ENCODE measurements at regions of chr9 and their contacts with region 1.

Region 1: GRCh38 chr9:97411789-97412625 is at the start of gene TDRD7:
- DNase-seq: peak; percentile 86 to 97 (median 92)
- ATAC-seq: peak; percentile 88
- H3K4me3 ChIP-seq: peak within 1 kb of the TSS; percentile 62 to 77
- H3K4me3 Mint-ChIP-seq: peak within 1 kb of the TSS; percentile 86
- H3K27ac ChIP-seq: peak within 1 kb of the TSS; percentile 56 to 79
- H3K27ac Mint-ChIP-seq: peak within 1 kb of the TSS; percentile 85
- H3K4me1 ChIP-seq: peaks cover 13% of the 10 kb centered on the region
- H3K4me1 Mint-ChIP-seq: peaks cover 27% of the 10 kb centered on the region
- H3K27me3 ChIP-seq: no peaks in the 10 kb centered on the region
- H3K27me3 Mint-ChIP-seq: peaks cover 14% of the 10 kb centered on the region
- CTCF ChIP-seq: peak; percentile 96
- total RNA-seq, gene TDRD7: 3.5 to 4.5 TPM

Region 2: DNA sequence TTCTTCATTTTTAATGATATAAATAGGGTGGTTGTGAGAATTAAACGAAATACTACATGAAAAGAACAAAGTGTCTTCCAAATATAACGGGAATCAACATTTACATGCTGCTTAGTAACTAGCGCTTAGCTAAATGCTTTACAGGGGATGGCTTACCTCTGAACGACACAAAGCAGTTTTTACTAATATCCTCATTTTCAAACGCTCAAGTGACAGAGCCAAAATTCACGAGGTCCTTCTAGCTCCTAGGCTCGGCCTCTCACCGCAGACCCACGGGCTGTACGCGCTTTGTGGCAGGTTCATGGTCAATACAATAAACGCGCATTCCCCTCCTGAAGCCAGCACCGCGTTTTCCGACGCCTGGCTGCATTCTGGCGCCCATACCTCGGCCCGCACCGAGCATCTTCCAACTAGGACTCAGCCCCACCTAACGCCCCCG is 634.6 kb before region 1 on chr9:
- CTCF ChIA-PET with region 1: no interaction called
- POLR2A ChIA-PET with region 1: no interaction called
- intact Hi-C with region 1: loop called (anchors 5 to 10 kb)
- DNase-seq: no peak
- ATAC-seq: no peak
- H3K4me3 ChIP-seq: peak overlapping the region; percentile 54 to 70
- H3K4me3 Mint-ChIP-seq: peak overlapping the region; percentile 97
- H3K27ac ChIP-seq: peak overlapping the region; percentile 76 to 77
- H3K27ac Mint-ChIP-seq: peak overlapping the region; percentile 99
- H3K4me1 ChIP-seq: peaks cover 14% of the 10 kb centered on the region
- H3K4me1 Mint-ChIP-seq: peaks cover 52% of the 10 kb centered on the region
- H3K27me3 ChIP-seq: no peaks in the 10 kb centered on the region
- H3K27me3 Mint-ChIP-seq: no peaks in the 10 kb centered on the region
- CTCF ChIP-seq: no peak

Region 3: GRCh38 chr9:97367729-97368128 is 44.3 kb before region 1 on chr9:
- CTCF ChIA-PET with region 1: no interaction called
- POLR2A ChIA-PET with region 1: no interaction called
- intact Hi-C with region 1: no loop called
- DNase-seq: no peak
- ATAC-seq: no peak
- H3K4me3 ChIP-seq: no peak overlapping the region
- H3K4me3 Mint-ChIP-seq: no peak overlapping the region
- H3K27ac ChIP-seq: no peak overlapping the region
- H3K27ac Mint-ChIP-seq: no peak overlapping the region
- H3K4me1 ChIP-seq: no peaks in the 10 kb centered on the region
- H3K4me1 Mint-ChIP-seq: peaks cover 2% of the 10 kb centered on the region
- H3K27me3 ChIP-seq: no peaks in the 10 kb centered on the region
- H3K27me3 Mint-ChIP-seq: no peaks in the 10 kb centered on the region
- CTCF ChIP-seq: no peak

Region 4: DNA sequence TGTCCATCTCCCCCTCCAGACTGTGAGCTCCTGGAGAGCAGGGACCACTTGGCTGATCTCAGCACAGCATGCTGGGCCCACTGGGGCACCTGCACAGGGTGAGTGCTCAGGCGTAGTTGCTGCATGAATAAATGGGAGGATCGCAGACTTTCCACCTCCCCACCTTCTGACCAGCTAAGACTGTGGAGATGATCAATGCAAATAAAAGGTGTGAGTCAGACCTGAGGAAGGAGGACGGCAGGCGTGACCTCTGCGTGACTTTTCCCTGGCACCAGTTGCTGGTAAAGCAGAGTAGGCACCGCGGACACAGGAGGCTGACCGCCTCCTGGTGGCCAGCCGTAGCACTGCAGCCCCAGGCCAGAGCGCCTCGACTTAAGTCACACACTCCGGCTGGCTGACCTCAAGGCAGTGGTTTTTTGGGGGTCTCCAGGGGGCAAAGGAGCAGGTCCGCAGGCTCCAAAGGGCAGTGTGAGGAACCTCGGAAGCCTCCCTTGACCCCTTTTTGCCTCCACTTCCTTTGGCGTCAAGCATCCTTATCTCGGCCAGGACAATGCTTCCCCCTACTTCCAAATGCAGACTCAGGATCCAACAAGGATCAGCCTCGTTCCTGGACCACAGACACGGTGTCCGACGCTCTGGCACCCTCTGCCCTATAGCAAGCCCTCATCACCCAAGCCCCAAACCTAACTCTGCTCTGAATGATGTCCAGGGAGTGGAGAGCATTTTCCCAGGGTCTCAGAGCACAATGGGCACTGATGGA is 12.8 kb before region 1 on chr9:
- CTCF ChIA-PET with region 1: interaction called, 3 read pairs
- POLR2A ChIA-PET with region 1: no interaction called
- intact Hi-C with region 1: loop called in 1 of 2 experiments (anchors 1 kb)
- DNase-seq: peak; percentile 37 to 77 (median 68)
- ATAC-seq: peak; percentile 89
- H3K4me3 ChIP-seq: no peak overlapping the region
- H3K4me3 Mint-ChIP-seq: no peak overlapping the region
- H3K27ac ChIP-seq: no peak overlapping the region
- H3K27ac Mint-ChIP-seq: no peak overlapping the region
- H3K4me1 ChIP-seq: no peaks in the 10 kb centered on the region
- H3K4me1 Mint-ChIP-seq: no peaks in the 10 kb centered on the region
- H3K27me3 ChIP-seq: no peaks in the 10 kb centered on the region
- H3K27me3 Mint-ChIP-seq: peaks cover 2% of the 10 kb centered on the region
- CTCF ChIP-seq: peak; percentile 98

Region 5: DNA sequence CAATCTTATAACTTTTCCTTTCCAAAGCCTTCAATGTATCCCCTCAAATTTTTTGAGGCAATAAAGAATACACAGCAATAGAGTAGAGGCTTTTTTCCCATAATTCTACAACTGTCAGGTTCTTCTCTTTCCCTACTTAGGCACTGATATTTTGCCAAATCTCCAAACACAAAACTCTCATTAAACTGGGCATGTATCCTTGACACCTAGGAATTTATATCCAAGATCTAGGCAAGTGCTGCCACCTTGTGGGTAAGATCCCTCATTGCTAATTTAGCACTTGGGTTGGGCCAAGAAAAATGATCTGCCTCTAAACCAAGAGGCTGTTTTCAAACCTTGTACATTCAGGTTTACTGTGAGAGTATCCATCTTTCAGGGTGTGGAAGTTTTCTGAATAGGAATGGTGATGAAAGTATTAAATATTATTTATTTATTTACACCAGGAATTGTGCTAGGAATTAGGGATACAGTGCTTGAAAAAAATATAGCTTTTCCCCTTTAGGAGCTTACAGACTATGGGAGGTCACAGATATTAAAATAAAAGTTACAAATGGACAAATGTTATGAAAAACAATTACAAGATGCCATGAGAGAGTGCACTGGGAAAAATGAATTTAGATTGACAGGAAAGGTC is 203.5 kb after region 1 on chr9:
- CTCF ChIA-PET with region 1: interaction called, 5 read pairs
- POLR2A ChIA-PET with region 1: interaction called, 4 read pairs
- intact Hi-C with region 1: loop called (anchors 1 kb)
- DNase-seq: peak in 8 of 9 experiments; percentile 22 to 74 (median 58)
- ATAC-seq: peak; percentile 67
- H3K4me3 ChIP-seq: no peak overlapping the region
- H3K4me3 Mint-ChIP-seq: no peak overlapping the region
- H3K27ac ChIP-seq: no peak overlapping the region
- H3K27ac Mint-ChIP-seq: no peak overlapping the region
- H3K4me1 ChIP-seq: no peaks in the 10 kb centered on the region
- H3K4me1 Mint-ChIP-seq: peaks cover 2% of the 10 kb centered on the region
- H3K27me3 ChIP-seq: no peaks in the 10 kb centered on the region
- H3K27me3 Mint-ChIP-seq: no peaks in the 10 kb centered on the region
- CTCF ChIP-seq: peak; percentile 97

Region 6: GRCh38 chr9:97740848-97741821 is 329.1 kb after region 1 on chr9:
- CTCF ChIA-PET with region 1: no interaction called
- POLR2A ChIA-PET with region 1: no interaction called
- intact Hi-C with region 1: no loop called
- DNase-seq: peak in 8 of 9 experiments; percentile 4 to 58 (median 32)
- ATAC-seq: peak; percentile 63
- H3K4me3 ChIP-seq: peak overlapping the region; percentile 11 to 50
- H3K4me3 Mint-ChIP-seq: peak overlapping the region; percentile 58
- H3K27ac ChIP-seq: no peak overlapping the region
- H3K27ac Mint-ChIP-seq: no peak overlapping the region
- H3K4me1 ChIP-seq: peaks cover 13% of the 10 kb centered on the region
- H3K4me1 Mint-ChIP-seq: peaks cover 10% of the 10 kb centered on the region
- H3K27me3 ChIP-seq: peaks cover 13 to 22% of the 10 kb centered on the region in 2 experiments
- H3K27me3 Mint-ChIP-seq: peaks cover 71% of the 10 kb centered on the region
- CTCF ChIP-seq: no peak

Region 7: DNA sequence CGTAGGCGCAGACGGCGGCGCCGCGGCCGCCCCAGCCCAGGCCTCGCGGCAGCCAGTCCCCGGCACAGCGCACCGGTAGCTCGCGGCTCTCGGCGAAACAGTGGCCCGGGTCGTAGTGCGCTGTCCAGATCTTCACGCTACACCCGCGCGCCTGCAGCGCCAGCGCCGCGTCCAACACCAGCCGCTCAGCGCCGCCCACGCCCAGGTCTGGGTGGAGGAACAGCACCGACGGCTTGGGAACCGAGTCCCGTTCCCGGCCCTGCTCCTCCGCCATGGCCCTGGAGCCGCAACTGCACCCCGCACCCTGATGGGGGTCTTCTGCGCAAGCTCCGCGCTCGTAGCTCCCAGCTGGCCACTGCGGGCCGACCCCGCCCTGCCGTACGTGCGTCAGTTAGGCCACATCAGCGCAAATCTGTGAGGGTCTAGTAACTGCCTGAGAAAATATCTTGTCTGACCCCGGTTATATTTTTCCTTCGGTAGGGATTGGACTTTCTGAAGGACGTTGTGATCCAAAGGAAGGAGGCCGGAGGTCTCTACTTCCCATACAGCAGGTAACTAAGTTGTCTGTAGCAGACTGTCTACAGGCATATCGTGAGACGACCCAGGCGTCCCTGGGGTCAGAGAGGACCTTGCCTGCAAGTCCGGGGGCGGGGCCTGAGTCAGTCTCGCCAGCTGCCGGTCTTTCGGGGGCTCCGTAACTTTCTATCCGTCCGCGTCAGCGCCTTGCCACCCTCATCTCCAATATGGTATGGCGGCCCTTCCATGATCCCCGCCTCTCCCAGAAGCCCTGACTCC is 1809.8 kb after region 1 on chr9 and contains the starts of genes ALG2 and SEC61B:
- CTCF ChIA-PET with region 1: no interaction called
- POLR2A ChIA-PET with region 1: no interaction called
- intact Hi-C with region 1: loop called in 1 of 2 experiments (anchors 5 kb)
- DNase-seq: peak; percentile 87 to 96 (median 94)
- ATAC-seq: peak; percentile 88
- H3K4me3 ChIP-seq: peak within 1 kb of the TSS; percentile 79 to 90
- H3K4me3 Mint-ChIP-seq: peak within 1 kb of the TSS; percentile 99
- H3K27ac ChIP-seq: peak within 1 kb of the TSS; percentile 95 to 99
- H3K27ac Mint-ChIP-seq: peak within 1 kb of the TSS; percentile 100
- H3K4me1 ChIP-seq: peaks cover 30% of the 10 kb centered on the region
- H3K4me1 Mint-ChIP-seq: peaks cover 80% of the 10 kb centered on the region
- H3K27me3 ChIP-seq: no peaks in the 10 kb centered on the region
- H3K27me3 Mint-ChIP-seq: no peaks in the 10 kb centered on the region
- CTCF ChIP-seq: no peak
- total RNA-seq, gene ALG2: 21.0 to 24.7 TPM
- total RNA-seq, gene SEC61B: 107 to 108 TPM